ENCODE measurements at regions of chr1 and their contacts with region 1.

Region 1: GRCh38 chr1:178774263-178774662 is 49.2 kb downstream of the RALGPS2 start:
- DNase-seq: peak; percentile 49
- H3K4me3 ChIP-seq: no peak overlapping the region
- H3K27ac ChIP-seq: no peak overlapping the region
- H3K4me1 ChIP-seq: no peaks in the 10 kb centered on the region
- H3K27me3 ChIP-seq: no peaks in the 10 kb centered on the region
- CTCF ChIP-seq: peak; percentile 64

Region 2: DNA sequence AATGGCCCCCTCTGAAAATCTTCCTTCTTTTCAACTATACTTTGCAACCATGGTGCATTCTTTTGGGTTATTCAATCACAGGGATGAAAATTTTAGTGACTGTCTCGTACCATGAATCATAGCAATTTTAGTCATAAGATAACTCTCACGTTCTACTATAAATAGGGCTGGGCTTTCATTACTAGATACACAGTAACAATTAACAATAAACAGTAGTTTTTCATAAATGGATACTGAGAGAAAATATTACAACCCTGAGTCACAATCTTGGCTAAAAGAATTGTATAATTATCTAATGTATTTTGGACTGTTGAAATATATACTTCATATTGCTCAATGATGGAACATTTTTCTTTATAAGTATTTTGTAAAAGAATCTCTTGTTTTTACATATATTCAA is 165.2 kb before region 1 on chr1:
- CTCF ChIA-PET with region 1: no interaction called
- POLR2A ChIA-PET with region 1: no interaction called
- intact Hi-C with region 1: no loop called
- DNase-seq: no peak
- H3K4me3 ChIP-seq: no peak overlapping the region
- H3K27ac ChIP-seq: no peak overlapping the region
- H3K4me1 ChIP-seq: no peaks in the 10 kb centered on the region
- H3K27me3 ChIP-seq: no peaks in the 10 kb centered on the region
- CTCF ChIP-seq: no peak

Region 3: DNA sequence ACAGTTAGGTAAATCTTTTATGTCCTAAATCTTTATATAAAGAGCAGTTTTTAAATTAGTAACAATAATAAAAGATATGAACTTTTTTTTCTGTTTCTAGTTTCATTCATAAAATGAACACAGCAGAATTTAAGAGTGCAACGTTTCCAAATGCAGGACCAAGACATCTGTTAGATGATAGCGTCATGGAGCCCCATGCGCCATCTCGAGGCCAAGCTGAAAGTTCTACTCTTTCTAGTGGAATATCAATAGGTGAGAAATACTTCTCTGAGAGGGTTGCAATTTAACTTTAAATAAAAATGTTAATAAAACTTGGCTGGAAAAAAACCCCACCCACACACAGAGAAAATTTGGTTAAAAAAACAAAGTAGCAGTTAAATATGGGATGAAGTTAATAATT is 111.6 kb after region 1 on chr1:
- CTCF ChIA-PET with region 1: no interaction called
- POLR2A ChIA-PET with region 1: no interaction called
- intact Hi-C with region 1: loop called (anchors 10 kb)
- DNase-seq: peak; percentile 23
- H3K4me3 ChIP-seq: no peak overlapping the region
- H3K27ac ChIP-seq: no peak overlapping the region
- H3K4me1 ChIP-seq: no peaks in the 10 kb centered on the region
- H3K27me3 ChIP-seq: no peaks in the 10 kb centered on the region
- CTCF ChIP-seq: peak; percentile 56

Measured in A673 (cell line).